MCF 10A (cell line): ENCODE measurements at regions of chr14 and their contacts with region 1.

Region 1: GRCh38 chr14:90903101-90903500 is 86.9 kb upstream of the TTC7B start:
- DNase-seq: peak; percentile 71
- H3K4me3 Mint-ChIP-seq: no peak overlapping the region
- H3K27ac Mint-ChIP-seq: no peak overlapping the region
- H3K4me1 Mint-ChIP-seq: no peaks in the 10 kb centered on the region
- H3K27me3 Mint-ChIP-seq: no peaks in the 10 kb centered on the region
- CTCF ChIP-seq: peak; percentile 81

Region 2: GRCh38 chr14:90301668-90302090 is 601.4 kb before region 1 on chr14:
- CTCF ChIA-PET with region 1: no interaction called
- POLR2A ChIA-PET with region 1: no interaction called
- intact Hi-C with region 1: loop called (anchors 5 kb)
- DNase-seq: peak; percentile 41
- H3K4me3 Mint-ChIP-seq: no peak overlapping the region
- H3K27ac Mint-ChIP-seq: peak overlapping the region; percentile 63
- H3K4me1 Mint-ChIP-seq: no peaks in the 10 kb centered on the region
- H3K27me3 Mint-ChIP-seq: no peaks in the 10 kb centered on the region
- CTCF ChIP-seq: peak; percentile 23

Region 3: DNA sequence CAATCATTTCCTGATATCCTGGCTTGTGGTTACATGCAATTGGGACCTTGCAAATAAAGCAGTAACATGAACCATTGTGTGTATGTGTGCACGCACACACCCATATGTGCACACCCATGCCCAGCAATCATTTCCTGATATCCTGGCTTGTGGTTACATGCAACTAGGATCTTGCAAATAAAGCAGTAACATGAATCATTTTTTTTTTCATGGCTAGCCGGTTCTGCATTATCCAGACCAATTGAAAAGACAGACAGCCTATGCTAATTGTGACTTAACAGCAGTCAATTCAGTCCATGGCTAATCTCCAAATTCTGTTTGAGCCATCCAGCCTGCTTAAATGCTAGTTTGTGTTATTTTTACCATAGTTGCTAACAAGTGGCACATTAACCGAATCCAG is 221.2 kb before region 1 on chr14:
- CTCF ChIA-PET with region 1: no interaction called
- POLR2A ChIA-PET with region 1: no interaction called
- intact Hi-C with region 1: no loop called
- DNase-seq: no peak
- H3K4me3 Mint-ChIP-seq: no peak overlapping the region
- H3K27ac Mint-ChIP-seq: no peak overlapping the region
- H3K4me1 Mint-ChIP-seq: peaks cover 8% of the 10 kb centered on the region
- H3K27me3 Mint-ChIP-seq: no peaks in the 10 kb centered on the region
- CTCF ChIP-seq: no peak

Region 4: GRCh38 chr14:90758028-90758889 is 144.8 kb before region 1 on chr14:
- CTCF ChIA-PET with region 1: interaction called, 11 read pairs
- POLR2A ChIA-PET with region 1: no interaction called
- intact Hi-C with region 1: loop called (anchors 5 kb)
- DNase-seq: peak; percentile 87
- H3K4me3 Mint-ChIP-seq: peak overlapping the region; percentile 72
- H3K27ac Mint-ChIP-seq: no peak overlapping the region
- H3K4me1 Mint-ChIP-seq: no peaks in the 10 kb centered on the region
- H3K27me3 Mint-ChIP-seq: no peaks in the 10 kb centered on the region
- CTCF ChIP-seq: peak; percentile 75

Region 5: GRCh38 chr14:90883782-90884181 is 19.3 kb before region 1 on chr14:
- CTCF ChIA-PET with region 1: interaction called, 17 read pairs
- POLR2A ChIA-PET with region 1: no interaction called
- intact Hi-C with region 1: no loop called
- DNase-seq: peak; percentile 22
- H3K4me3 Mint-ChIP-seq: peak overlapping the region; percentile 4
- H3K27ac Mint-ChIP-seq: peak overlapping the region; percentile 99
- H3K4me1 Mint-ChIP-seq: peaks cover 10% of the 10 kb centered on the region
- H3K27me3 Mint-ChIP-seq: no peaks in the 10 kb centered on the region
- CTCF ChIP-seq: no peak

Region 6: DNA sequence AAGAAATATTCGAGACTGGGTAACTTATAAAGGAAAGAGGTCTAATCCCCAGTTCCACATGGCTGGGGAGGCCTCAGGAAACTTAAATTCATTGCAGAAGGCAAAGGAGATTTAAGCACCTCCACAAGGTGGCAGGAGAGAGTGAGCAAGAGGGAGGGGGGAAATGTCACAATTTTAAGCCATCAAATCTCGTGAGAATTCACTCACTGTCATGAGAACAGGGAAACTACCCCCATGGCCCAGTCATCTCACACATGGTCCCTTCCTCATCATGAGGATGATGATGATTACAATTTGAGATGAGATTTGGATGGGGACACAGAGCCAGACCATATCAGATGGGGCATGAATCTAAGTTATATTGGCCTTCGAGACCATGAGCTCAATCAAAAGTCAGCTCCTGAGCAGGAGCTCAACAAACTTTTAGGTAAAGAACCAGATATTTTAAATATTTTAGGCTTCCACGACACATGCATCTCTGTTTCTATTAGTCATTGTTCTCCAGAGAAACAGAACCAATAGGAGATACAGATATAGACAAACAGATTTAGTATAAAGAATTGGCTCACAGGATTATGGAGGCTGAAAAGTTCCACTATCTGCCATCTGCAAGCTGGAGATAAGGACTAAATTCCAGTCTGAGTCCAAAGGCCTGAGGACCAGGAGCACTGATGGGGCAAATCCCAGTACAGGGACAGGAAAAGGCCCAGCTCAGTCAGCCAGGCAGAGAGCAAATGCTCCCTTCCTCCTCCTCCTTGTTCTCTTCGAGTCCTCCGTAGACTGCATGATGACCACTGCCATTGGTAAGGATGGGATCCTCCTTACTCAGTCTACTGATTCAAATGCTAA is 235.6 kb after region 1 on chr14:
- CTCF ChIA-PET with region 1: interaction called, 44 read pairs
- POLR2A ChIA-PET with region 1: no interaction called
- intact Hi-C with region 1: loop called (anchors 1 kb)
- DNase-seq: peak; percentile 68
- H3K4me3 Mint-ChIP-seq: no peak overlapping the region
- H3K27ac Mint-ChIP-seq: no peak overlapping the region
- H3K4me1 Mint-ChIP-seq: peaks cover 4% of the 10 kb centered on the region
- H3K27me3 Mint-ChIP-seq: no peaks in the 10 kb centered on the region
- CTCF ChIP-seq: peak; percentile 49

Region 7: GRCh38 chr14:91286530-91286937 is 383.4 kb after region 1 on chr14:
- CTCF ChIA-PET with region 1: interaction called, 15 read pairs
- POLR2A ChIA-PET with region 1: no interaction called
- intact Hi-C with region 1: loop called (anchors 1 kb)
- DNase-seq: peak; percentile 83
- H3K4me3 Mint-ChIP-seq: no peak overlapping the region
- H3K27ac Mint-ChIP-seq: no peak overlapping the region
- H3K4me1 Mint-ChIP-seq: peaks cover 23% of the 10 kb centered on the region
- H3K27me3 Mint-ChIP-seq: no peaks in the 10 kb centered on the region
- CTCF ChIP-seq: peak; percentile 76